ENCODE measurements at regions of chr10 and their contacts with region 1.

Region 1: DNA sequence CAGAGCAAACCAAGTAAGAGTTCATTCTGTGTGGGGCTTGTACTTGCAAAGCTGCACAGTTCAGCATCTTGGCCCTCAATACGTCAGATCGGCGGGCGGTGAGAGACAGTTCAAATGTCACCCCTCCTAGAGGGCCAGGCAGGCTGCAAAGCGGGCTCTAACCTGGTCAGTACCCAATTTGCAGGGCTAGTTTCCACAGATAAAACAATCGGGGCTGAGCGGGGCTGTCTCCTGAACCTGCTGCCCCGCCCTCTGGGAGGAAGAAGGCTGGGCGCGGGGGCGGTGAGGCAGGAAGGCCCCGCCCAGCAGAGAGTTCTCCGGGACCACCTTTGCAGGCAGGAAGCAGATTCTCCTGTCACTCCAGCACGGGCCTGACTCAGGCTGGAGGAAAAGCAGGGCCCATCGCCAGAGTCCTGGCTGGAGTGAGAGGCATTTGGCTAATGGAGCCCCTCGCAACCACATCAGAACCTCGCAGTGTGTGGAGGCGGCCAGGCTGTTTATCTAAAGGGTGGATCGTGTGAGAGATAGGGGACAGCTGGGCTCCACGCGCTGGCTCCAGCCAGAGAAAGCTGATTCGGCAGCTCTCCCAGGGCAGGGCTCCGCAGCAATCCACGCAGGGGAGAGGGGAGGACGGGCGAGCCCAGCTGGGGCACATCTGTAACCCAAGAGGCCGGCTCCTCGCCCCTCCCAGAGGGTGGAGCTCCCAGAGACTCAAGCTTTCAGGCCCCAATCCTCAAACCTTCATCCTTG is 83.1 kb downstream of the SH3PXD2A start:
- DNase-seq: peak; percentile 72
- ATAC-seq: peak; percentile 90
- H3K4me3 Mint-ChIP-seq: peak overlapping the region; percentile 81
- H3K27ac Mint-ChIP-seq: peak overlapping the region; percentile 91
- H3K4me1 Mint-ChIP-seq: peaks cover 28% of the 10 kb centered on the region
- H3K27me3 Mint-ChIP-seq: peaks cover 11% of the 10 kb centered on the region

Region 2: GRCh38 chr10:103752680-103753248 is 19.5 kb before region 1 on chr10:
- CTCF ChIA-PET with region 1: interaction called, 64 read pairs
- POLR2A ChIA-PET with region 1: interaction called, 3 read pairs
- DNase-seq: peak; percentile 42
- ATAC-seq: no peak
- H3K4me3 Mint-ChIP-seq: no peak overlapping the region
- H3K27ac Mint-ChIP-seq: no peak overlapping the region
- H3K4me1 Mint-ChIP-seq: peaks cover 24% of the 10 kb centered on the region
- H3K27me3 Mint-ChIP-seq: peaks cover 24% of the 10 kb centered on the region

Region 3: GRCh38 chr10:103759100-103759781 is 13.0 kb before region 1 on chr10:
- CTCF ChIA-PET with region 1: interaction called, 64 read pairs
- POLR2A ChIA-PET with region 1: interaction called, 3 read pairs
- DNase-seq: no peak
- ATAC-seq: no peak
- H3K4me3 Mint-ChIP-seq: no peak overlapping the region
- H3K27ac Mint-ChIP-seq: peak overlapping the region; percentile 30
- H3K4me1 Mint-ChIP-seq: peaks cover 53% of the 10 kb centered on the region
- H3K27me3 Mint-ChIP-seq: peaks cover 18% of the 10 kb centered on the region